Activated CD4-positive, alpha-beta memory T cell treated with anti-CD3 and anti-CD28 coated beads for 36 hours (primary cell): ENCODE measurements at regions of chr12 and their contacts with region 1.

Region 1: DNA sequence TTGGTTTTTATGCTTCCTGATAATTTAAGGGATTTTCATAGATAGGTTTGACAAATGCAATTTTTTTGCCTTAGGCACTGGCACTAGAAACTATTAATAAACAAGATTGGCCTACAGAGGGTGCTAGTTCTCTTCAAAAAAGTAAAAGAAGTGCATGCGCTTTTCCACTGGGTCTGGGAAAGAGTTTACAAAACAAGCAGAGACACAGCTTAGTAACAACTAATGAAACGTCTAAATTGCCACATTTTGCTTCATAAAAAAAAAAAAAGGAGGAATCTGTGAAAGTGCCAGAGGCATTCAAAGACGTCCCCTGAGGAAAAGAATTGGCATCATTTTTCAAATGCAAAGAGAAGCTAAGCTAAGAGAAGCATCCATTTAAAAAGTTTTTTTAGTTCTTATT is 58.3 kb upstream of the EEA1 start:
- DNase-seq: no peak
- H3K4me3 Mint-ChIP-seq: no peak overlapping the region
- H3K27ac Mint-ChIP-seq: peak overlapping the region; percentile 66
- H3K4me1 Mint-ChIP-seq: peaks cover 33% of the 10 kb centered on the region
- H3K27me3 Mint-ChIP-seq: no peaks in the 10 kb centered on the region

Region 2: GRCh38 chr12:92784795-92785562 is 202.4 kb before region 1 on chr12:
- CTCF ChIA-PET with region 1: interaction called, 12 read pairs
- POLR2A ChIA-PET with region 1: interaction called, 4 read pairs
- intact Hi-C with region 1: loop called (anchors 1 kb)
- DNase-seq: no peak
- H3K4me3 Mint-ChIP-seq: no peak overlapping the region
- H3K27ac Mint-ChIP-seq: no peak overlapping the region
- H3K4me1 Mint-ChIP-seq: no peaks in the 10 kb centered on the region
- H3K27me3 Mint-ChIP-seq: no peaks in the 10 kb centered on the region

Region 3: GRCh38 chr12:93008044-93008778 is 20.8 kb after region 1 on chr12:
- CTCF ChIA-PET with region 1: interaction called, 14 read pairs
- POLR2A ChIA-PET with region 1: no interaction called
- intact Hi-C with region 1: loop called (anchors 1 kb)
- DNase-seq: no peak
- H3K4me3 Mint-ChIP-seq: no peak overlapping the region
- H3K27ac Mint-ChIP-seq: no peak overlapping the region
- H3K4me1 Mint-ChIP-seq: peaks cover 9% of the 10 kb centered on the region
- H3K27me3 Mint-ChIP-seq: peaks cover 3% of the 10 kb centered on the region

Region 4: DNA sequence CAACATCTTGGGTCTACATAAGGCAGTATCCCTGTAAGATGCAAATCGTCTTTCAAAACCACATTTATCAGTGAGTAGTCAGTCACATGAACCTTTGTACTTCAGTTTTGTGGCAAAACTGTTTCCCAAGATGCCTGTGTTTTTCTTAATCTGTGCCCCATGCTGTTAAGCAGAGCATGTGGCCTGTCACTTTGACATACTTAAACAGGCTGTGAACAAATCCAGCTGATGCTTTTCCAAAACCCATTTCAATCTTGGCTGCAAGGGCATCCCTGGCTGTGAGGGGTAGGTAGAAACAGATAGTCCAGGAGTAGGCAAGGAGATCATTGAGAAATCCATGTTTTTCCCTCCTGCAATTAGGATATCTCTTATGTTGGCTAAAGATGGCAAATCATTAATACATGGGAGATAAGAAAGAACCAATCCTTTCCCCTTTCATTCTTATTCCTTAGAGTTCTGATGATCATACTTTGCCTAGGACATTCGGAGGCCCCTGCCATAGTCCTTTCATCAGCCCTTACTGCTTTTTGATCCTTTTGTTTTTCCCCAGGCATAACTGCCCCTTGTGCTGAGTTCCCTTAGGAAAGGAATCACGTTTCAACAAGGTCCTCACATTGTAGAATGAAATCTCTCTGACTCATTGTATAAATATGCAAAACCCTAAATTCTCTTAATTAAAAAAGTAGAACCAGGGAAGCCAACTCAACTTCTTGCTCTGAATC is 62.8 kb after region 1 on chr12:
- CTCF ChIA-PET with region 1: no interaction called
- POLR2A ChIA-PET with region 1: no interaction called
- intact Hi-C with region 1: no loop called
- DNase-seq: no peak
- H3K4me3 Mint-ChIP-seq: no peak overlapping the region
- H3K27ac Mint-ChIP-seq: no peak overlapping the region
- H3K4me1 Mint-ChIP-seq: no peaks in the 10 kb centered on the region
- H3K27me3 Mint-ChIP-seq: peaks cover 8% of the 10 kb centered on the region

Region 5: DNA sequence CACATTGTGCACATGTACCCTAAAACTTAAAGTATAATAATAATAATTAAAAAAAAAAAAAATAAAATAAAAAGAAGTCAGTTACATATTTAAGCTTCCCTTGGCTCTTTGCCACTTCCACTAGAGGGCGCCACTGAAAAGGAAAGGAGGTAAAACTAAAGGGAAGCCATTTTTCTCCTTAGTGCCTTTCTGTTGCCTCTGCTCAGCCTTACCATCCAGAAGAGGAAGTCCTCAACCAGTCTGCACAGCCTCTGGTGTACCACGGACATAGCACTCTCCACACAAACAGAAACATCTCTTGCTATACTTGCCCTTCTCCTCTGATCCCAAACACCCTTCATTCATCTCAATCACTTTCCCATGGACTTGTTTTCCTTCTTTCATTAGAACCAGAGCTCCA is 110.7 kb after region 1 on chr12:
- CTCF ChIA-PET with region 1: interaction called, 25 read pairs
- POLR2A ChIA-PET with region 1: no interaction called
- intact Hi-C with region 1: loop called (anchors 2 kb)
- DNase-seq: peak; percentile 75
- H3K4me3 Mint-ChIP-seq: no peak overlapping the region
- H3K27ac Mint-ChIP-seq: no peak overlapping the region
- H3K4me1 Mint-ChIP-seq: peaks cover 9% of the 10 kb centered on the region
- H3K27me3 Mint-ChIP-seq: no peaks in the 10 kb centered on the region

Region 6: DNA sequence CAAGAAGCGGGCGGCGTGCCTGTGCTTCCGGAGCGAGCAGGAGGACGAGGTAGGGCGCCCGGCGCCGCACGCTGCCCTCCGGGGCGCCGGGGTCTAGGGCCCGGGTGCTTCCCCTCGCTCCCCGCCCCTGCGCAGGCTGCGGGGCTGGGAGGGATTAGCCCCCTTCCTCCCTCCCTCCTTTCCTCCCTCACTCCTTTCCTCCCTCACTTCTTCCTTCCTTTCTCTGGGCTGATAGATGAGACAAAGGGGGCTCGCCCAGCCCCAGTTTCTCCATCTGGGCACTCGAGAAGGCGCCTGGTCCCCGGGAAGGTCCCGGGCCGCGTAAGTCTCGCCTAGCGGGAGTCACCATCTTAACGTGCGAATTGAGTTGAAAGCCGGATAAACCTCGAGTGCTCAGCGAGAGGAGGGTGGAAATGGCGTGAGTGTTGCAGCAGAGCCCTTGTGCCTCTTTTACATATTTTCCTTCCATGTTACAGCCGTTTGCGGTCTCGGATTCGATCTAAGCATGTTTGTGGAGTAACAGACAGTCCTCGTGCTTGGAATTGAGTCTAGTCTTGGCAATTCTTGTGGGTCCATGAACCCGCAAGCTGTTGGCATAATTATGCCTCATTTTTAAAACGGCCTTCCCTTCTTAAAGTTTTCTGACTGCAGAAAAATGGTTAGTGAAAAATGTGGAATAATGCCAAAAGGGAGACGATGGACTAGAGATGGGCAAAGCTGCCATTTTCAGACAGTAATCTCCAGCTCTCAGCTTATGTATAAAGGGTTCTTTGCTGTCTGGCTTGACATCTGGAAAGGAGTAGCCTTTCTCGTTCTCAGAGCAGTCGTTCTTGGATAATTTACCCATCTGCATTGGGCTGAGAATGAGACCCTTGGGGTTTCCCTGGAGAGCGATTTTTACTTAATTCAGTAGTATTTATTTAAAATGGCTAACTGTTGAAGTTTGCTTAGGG is 391.3 kb after region 1 on chr12:
- CTCF ChIA-PET with region 1: interaction called, 11 read pairs
- POLR2A ChIA-PET with region 1: no interaction called
- intact Hi-C with region 1: no loop called
- DNase-seq: peak; percentile 74
- H3K4me3 Mint-ChIP-seq: peak overlapping the region; percentile 99
- H3K27ac Mint-ChIP-seq: peak overlapping the region; percentile 99
- H3K4me1 Mint-ChIP-seq: peaks cover 40% of the 10 kb centered on the region
- H3K27me3 Mint-ChIP-seq: no peaks in the 10 kb centered on the region

Region 7: DNA sequence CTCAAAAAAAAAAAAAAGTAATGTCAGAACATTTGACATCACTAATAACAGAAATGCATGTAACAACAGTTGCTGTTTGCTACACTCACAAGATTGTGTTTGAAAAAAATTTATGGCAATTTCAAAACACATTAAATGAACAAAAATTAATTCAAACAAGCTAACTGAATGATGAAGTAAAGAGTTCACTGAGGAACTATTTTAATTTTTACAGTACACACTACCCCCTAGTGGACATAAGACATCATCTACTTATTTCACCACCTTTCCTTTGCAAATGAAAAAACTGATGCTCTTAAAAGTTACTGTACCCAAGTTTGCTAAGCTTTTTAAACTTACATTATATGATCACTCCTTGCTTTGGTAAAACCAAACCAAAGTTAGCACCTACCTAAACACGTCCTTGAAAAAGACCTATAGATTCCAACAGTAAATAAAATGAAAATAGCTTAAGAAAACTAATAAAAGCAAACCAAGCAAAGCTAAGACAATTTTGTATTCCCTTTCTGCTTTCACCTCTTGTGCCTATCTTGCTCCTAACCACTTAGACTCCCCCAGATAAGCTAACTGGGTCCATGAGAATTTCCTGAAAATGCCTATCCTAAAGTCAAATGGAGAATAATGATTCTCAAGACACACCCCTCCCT is 432.1 kb after region 1 on chr12:
- CTCF ChIA-PET with region 1: interaction called, 64 read pairs
- POLR2A ChIA-PET with region 1: interaction called, 4 read pairs
- intact Hi-C with region 1: loop called (anchors 5 kb)
- DNase-seq: no peak
- H3K4me3 Mint-ChIP-seq: no peak overlapping the region
- H3K27ac Mint-ChIP-seq: no peak overlapping the region
- H3K4me1 Mint-ChIP-seq: peaks cover 85% of the 10 kb centered on the region
- H3K27me3 Mint-ChIP-seq: no peaks in the 10 kb centered on the region

Region 8: DNA sequence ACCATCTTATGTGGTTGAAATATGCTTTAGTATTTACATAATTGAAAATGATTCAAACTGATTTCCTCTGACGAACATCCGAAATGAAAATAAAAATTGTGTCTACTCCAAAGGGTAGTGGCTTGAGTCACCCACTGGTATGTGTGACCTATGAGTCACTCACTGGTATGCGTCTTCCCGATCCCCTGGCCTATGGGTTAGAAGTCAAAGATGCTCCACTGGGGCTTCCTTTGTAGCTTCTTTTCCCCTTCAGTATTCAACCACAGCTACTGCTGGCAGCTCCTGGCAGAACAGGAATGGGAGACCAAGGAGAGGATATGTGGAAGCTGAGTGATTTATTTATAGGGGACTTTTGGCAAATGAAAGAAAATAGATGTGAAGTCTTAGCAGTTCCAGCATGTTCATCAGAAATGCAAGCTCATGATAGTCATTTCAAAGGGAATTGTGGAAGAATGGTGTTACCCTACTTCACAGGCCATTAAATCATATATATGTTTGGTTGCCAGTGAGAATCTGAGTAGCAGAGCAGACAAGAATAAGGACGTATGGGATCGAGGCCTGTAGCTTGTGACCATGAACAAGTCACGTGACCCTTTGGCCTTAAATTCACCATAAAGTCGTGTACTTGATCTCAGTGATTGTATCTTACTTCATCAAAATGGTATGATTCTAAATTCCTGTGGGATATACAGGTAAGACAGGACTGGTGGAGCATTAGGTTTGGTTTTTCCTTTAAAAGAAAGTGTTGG is 798.1 kb after region 1 on chr12:
- CTCF ChIA-PET with region 1: no interaction called
- POLR2A ChIA-PET with region 1: no interaction called
- intact Hi-C with region 1: loop called (anchors 10 kb)
- DNase-seq: peak; percentile 73
- H3K4me3 Mint-ChIP-seq: peak overlapping the region; percentile 16
- H3K27ac Mint-ChIP-seq: peak overlapping the region; percentile 81
- H3K4me1 Mint-ChIP-seq: peaks cover 57% of the 10 kb centered on the region
- H3K27me3 Mint-ChIP-seq: no peaks in the 10 kb centered on the region